Activated naive CD4-positive, alpha-beta T cell treated with anti-CD3 and anti-CD28 coated beads for 36 hours (primary cell): ENCODE measurements at regions of chr14 and their contacts with region 1.

Region 1: DNA sequence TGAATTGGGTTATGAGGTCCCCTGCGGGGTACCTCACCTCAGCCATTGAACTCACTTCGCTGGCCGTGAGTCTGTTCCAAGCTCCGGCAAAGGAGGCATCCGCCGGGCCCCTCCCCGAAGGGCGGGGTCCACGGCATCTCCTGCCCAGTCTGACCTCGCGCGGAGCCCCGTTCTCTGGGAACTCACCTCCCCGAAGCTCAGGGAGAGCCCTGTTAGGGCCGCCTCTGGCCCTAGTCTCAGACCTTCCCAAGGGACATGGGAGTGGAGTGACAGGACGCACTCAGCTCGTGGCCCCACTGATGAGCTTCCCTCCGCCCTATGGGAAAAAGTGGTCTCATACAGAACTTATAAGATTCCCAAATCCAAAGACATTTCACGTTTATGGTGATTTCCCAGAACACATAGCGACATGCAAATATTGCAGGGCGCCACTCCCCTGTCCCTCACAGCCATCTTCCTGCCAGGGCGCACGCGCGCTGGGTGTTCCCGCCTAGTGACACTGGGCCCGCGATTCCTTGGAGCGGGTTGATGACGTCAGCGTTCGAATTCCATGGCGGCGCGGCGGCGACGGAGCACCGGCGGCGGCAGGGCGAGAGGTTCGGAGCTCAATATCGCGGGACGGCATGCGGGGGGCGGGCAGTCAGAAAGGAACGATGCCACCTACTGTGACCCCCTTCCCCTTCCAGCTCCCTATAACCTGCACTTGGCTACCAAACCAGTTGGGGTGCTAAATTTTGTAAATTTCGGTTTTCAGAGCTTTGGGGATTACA is at the start of gene PARP2:
- DNase-seq: peak; percentile 96
- H3K4me3 Mint-ChIP-seq: peak within 1 kb of the TSS; percentile 96
- H3K27ac Mint-ChIP-seq: peak within 1 kb of the TSS; percentile 95
- H3K4me1 Mint-ChIP-seq: peaks cover 19% of the 10 kb centered on the region
- H3K27me3 Mint-ChIP-seq: peaks cover 2% of the 10 kb centered on the region
- total RNA-seq, gene PARP2: 62.5 to 63.5 TPM

Region 2: DNA sequence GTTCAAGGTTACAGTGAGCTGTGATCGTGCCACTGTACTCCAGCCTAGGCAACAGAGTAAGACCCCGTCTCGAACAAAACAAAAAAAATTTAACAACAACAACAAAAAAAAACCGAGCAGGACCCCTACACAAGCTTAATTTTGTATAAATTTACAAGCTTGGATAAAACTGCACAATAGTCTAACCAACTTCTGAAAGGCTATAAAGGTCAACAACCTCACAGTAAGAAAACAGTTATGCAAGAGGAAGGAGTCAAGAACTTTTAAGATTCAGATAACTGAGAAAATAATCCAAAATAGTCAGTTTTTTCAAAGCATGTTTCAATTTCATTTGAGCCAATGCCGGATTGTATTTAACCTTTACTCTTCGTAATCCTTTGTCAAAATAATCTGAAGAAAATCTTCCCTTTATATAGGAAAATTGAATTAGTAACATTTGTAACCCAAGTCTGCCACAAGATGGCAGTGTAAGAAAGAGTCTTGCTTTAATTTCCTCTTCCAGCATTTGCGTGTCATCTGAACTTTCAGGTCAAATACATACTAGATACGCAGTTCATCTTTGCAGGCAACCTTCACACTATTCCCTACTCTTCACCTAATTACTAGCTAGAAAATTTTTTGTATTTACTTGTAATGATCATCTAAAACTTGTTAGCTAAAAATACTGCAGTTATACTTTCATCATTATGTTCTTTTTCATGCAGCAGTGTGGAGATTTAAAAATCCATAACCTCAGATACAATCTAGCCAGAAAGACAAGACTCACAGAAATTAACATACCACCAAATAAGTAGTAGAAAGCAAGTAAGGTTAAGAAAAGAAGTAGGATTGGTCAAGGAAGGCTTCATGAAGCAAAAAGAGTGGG is 16.0 kb before region 1 on chr14:
- CTCF ChIA-PET with region 1: interaction called, 83 read pairs
- intact Hi-C with region 1: no loop called
- DNase-seq: peak; percentile 38
- H3K4me3 Mint-ChIP-seq: no peak overlapping the region
- H3K27ac Mint-ChIP-seq: peak overlapping the region; percentile 57
- H3K4me1 Mint-ChIP-seq: peaks cover 45% of the 10 kb centered on the region
- H3K27me3 Mint-ChIP-seq: no peaks in the 10 kb centered on the region

Region 3: DNA sequence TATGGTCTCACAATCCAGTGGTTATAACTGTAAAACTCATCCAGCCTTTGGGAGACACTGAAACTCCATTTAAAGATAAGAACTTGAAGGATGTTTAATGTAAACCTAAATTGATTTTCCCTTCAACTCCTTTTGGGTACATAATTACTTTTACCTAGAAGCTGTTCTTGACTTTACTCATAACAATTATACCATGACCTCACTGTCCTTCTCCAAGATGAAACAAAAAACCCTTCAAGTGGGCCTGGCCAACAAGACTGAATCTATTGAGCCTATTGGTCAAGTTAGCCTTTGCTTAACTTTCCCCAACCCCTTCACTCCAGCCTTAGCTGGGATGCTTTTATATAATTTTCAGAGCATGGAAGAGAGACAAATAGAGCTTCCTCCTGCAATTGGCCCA is 22.7 kb after region 1 on chr14:
- CTCF ChIA-PET with region 1: no interaction called
- intact Hi-C with region 1: loop called (anchors 1 kb)
- DNase-seq: no peak
- H3K4me3 Mint-ChIP-seq: no peak overlapping the region
- H3K27ac Mint-ChIP-seq: no peak overlapping the region
- H3K4me1 Mint-ChIP-seq: peaks cover 23% of the 10 kb centered on the region
- H3K27me3 Mint-ChIP-seq: no peaks in the 10 kb centered on the region

Region 4: DNA sequence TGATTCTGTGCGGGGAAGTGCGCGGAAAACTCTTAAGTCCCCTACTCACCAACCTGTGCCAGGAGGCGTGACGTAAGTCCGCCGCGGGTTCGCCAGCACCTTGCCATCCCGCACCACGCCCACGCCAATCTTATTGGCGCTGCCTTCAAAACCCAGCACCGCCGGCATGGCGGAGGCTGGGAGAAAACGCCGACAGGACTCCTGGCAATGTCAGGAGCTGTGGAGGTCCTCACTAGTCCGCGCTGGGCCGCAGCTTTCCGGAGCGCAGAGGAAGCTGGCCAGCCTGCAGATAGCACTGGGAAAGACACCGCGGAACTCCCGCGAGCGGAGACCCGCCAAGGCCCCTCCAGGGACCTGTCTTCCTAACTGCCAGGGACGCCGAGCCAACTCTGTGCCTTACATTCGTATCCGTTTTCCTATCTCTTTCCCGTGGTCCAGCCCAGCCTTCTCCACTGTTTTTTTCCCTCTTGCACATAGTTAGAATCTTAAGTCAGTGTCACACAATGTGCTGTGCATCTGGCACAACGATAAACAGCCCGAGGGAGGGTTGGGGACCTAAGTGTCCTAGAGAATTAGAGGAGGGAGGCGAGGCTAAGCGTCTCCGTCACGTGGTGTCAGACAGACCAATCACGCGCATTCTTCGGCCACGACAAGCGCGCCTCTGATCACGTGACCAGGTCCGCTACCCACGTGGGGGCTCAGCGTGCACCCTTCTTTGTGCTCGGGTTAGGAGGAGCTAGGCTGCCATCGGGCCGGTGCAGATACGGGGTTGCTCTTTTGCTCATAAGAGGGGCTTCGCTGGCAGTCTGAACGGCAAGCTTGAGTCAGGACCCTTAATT is 111.5 kb after region 1 on chr14 and contains the starts of genes APEX1 and OSGEP:
- CTCF ChIA-PET with region 1: interaction called, 4 read pairs
- intact Hi-C with region 1: loop called (anchors 1 kb)
- DNase-seq: peak; percentile 99
- H3K4me3 Mint-ChIP-seq: peak within 1 kb of the TSS; percentile 52
- H3K27ac Mint-ChIP-seq: no peak within 1 kb of the TSS
- H3K4me1 Mint-ChIP-seq: peaks cover 31% of the 10 kb centered on the region
- H3K27me3 Mint-ChIP-seq: no peaks in the 10 kb centered on the region
- total RNA-seq, gene APEX1: 187 to 190 TPM
- total RNA-seq, gene OSGEP: 35.7 to 36.8 TPM

Region 5: DNA sequence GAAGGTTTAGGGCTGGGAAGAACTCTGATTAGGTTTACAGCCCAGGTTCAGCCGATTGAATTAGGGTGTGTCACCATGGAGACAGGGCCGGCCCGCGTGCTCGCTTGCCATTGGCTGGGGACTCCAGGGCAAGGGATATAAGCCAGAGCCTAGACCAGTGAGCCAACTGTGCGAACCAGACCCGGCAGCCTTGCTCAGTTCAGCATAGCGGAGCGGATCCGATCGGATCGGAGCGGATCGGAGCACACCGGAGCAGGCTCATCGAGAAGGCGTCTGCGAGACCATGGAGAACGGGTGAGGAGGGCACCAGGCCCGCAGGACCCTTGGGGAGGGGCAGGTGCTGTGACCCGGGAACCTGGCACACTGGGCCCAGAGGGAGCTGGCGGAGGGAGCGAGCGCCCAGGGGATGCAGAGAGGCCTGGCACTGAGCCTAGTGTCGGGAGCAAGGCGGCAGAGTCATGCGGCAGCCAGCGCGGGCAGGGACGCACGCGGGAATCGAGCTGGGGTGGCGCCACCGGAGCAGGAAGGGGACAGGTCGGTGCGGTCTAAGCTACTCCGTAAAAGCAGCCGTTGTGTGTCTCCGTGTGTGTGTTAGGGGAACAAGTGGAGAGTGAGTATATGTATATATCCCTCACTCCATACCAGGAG is 126.1 kb after region 1 on chr14 and contains the start of gene PNP:
- CTCF ChIA-PET with region 1: no interaction called
- intact Hi-C with region 1: loop called (anchors 1 kb)
- DNase-seq: peak; percentile 91
- H3K4me3 Mint-ChIP-seq: peak within 1 kb of the TSS; percentile 88
- H3K27ac Mint-ChIP-seq: peak within 1 kb of the TSS; percentile 97
- H3K4me1 Mint-ChIP-seq: peaks cover 36% of the 10 kb centered on the region
- H3K27me3 Mint-ChIP-seq: no peaks in the 10 kb centered on the region
- total RNA-seq, gene PNP: 187 to 191 TPM